ENCODE measurements at regions of chr11 and their contacts with region 1.

Region 1: DNA sequence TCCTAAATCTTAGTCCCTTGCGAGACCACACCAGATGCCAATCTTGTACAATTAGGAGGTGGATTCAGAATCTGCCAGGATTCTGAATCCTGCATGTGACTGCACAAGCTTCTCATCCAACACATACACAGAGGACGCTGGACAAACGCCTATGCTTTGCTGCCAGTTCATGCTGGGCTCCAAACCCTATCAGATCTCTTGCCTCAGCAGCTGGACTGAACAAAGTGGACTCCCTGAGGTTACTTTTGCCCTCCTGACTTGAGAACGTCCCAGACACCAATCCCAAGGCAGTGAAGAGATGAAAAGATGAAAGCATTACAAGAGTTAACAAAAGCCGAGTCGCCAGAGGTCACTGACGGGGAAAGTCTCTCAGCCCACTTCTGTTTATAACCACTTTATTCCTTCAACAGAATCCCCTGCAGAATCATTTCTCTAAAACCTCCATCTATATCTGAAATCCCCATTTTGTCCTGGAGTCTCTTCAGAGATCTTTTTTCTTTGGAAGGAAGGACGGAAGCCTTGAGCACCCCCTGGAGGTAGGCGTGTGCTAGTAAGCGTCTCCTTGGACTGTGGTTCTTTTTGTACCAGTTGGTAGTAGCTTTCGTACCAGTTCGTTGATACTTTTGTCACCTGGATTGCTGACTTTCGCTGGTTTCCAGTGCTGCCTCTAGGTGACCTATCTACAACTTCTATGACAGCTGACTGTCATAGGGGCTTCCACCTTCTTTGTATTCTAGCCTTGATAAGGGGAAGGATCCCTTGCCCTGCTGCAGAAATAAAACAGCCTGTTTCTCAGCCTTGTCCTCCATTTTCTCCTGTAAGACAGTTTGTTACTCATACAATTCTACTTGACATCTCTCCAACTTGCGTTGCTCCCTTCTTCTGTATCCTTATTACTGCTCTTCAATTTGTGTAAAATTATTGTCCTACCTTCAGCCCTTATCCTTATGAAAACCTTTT is 26.1 kb upstream of the EED start:
- DNase-seq: no peak
- ATAC-seq: peak; percentile 22
- H3K4me3 Mint-ChIP-seq: peak overlapping the region; percentile 69
- H3K27ac Mint-ChIP-seq: peak overlapping the region; percentile 94
- H3K4me1 Mint-ChIP-seq: peaks cover 48% of the 10 kb centered on the region
- H3K27me3 Mint-ChIP-seq: no peaks in the 10 kb centered on the region
- CTCF ChIP-seq: peak; percentile 32

Region 2: DNA sequence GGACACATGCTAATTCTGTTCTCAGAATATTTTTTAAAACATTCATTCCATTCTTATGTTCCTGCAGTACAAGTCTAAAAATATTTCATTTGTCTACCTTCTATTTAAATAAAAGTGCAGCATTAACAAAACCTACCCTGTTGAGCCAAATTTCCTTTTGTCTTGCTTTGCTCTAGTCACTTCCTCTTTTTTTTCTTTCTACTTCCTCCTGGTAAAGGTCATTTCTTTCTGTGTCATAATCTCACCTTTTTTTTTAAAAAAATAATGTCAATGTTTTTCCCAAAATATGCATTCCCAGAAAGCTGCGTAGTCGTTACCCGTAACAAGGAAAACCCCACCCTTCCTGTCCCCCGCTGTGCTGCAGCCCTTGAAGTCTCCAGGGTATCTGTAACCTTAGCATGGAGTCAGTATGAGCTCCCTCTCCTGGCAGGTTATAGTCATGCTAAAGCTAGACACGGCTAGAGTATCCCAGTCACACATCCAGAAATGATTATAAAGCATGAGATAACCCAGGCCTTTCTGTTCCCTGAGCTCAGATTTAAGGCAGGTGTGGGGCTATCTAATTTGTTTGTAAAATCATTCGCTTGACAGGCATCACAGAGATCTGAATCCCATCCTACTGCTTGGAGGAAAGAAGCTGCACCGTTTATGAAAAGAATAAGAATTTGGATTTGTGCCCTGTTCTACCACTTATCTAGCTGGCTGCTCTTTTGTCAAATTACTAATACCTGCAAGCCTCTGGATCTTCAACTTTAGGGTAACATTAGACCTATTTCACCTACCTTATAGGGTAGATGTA is 24.9 kb before region 1 on chr11:
- CTCF ChIA-PET with region 1: interaction called, 15 read pairs
- POLR2A ChIA-PET with region 1: interaction called, 18 read pairs
- intact Hi-C with region 1: loop called (anchors 1 kb)
- DNase-seq: peak; percentile 48
- ATAC-seq: peak; percentile 96
- H3K4me3 Mint-ChIP-seq: peak overlapping the region; percentile 76
- H3K27ac Mint-ChIP-seq: peak overlapping the region; percentile 92
- H3K4me1 Mint-ChIP-seq: peaks cover 30% of the 10 kb centered on the region
- H3K27me3 Mint-ChIP-seq: no peaks in the 10 kb centered on the region
- CTCF ChIP-seq: peak; percentile 50

Region 3: DNA sequence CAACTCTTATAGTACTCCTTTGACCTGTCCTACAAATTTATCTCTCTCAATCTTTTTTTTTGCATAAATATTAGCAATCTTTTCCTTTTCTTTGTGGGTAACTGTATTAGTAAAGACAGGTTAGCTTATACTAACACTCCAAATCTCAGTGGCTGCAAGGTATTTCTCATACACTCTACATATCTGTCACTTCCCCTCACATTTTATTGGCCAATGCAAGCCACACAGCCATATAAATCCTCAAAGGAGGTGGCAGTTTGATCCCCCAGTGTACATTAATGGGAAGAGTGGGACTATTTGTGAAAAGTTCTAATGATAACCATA is 16.4 kb before region 1 on chr11:
- CTCF ChIA-PET with region 1: interaction called, 10 read pairs
- POLR2A ChIA-PET with region 1: interaction called, 23 read pairs
- intact Hi-C with region 1: loop called (anchors 1 kb)
- DNase-seq: no peak
- ATAC-seq: peak; percentile 46
- H3K4me3 Mint-ChIP-seq: no peak overlapping the region
- H3K27ac Mint-ChIP-seq: no peak overlapping the region
- H3K4me1 Mint-ChIP-seq: peaks cover 9% of the 10 kb centered on the region
- H3K27me3 Mint-ChIP-seq: no peaks in the 10 kb centered on the region
- CTCF ChIP-seq: no peak

Region 4: GRCh38 chr11:86228269-86229220 is 10.1 kb after region 1 on chr11:
- CTCF ChIA-PET with region 1: no interaction called
- POLR2A ChIA-PET with region 1: interaction called, 3 read pairs
- intact Hi-C with region 1: loop called (anchors 1 kb)
- DNase-seq: no peak
- ATAC-seq: no peak
- H3K4me3 Mint-ChIP-seq: no peak overlapping the region
- H3K27ac Mint-ChIP-seq: no peak overlapping the region
- H3K4me1 Mint-ChIP-seq: peaks cover 17% of the 10 kb centered on the region
- H3K27me3 Mint-ChIP-seq: no peaks in the 10 kb centered on the region
- CTCF ChIP-seq: no peak